Body of pancreas (tissue), 4 donors: ENCODE measurements at regions of chr4 and their contacts with region 1.

Region 1: DNA sequence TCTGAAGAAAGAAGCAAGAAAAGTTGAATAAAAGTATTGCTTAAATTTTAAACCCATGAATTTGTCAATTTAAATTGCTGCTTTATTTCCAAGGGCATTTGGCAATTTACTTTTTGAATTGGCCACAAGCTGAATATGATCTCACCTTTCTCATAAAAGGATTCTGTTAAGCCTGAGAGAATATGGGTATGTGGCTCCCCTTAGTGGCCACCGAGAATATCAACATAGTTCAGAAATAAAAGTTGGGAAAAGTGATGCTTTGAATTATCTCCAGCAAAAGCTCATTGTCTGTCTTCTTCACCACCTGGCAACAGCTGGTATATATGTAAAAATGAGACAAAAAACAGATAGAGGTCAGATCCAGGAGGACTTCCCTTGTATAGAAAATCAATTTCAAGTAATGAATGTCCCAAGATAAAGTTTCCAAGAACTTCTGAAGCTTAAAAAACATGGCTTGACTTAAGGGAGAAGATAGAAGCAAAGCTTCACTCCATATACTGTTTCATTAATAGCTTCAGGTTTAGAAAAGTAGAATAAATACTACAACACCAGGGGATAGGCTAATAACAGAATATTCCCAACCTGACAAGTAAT is 290.7 kb upstream of the FAM241A start:
- DNase-seq: peak; percentile 22 to 37 (median 30)
- ATAC-seq: peak; percentile 77
- H3K4me3 ChIP-seq: no peak overlapping the region
- H3K27ac ChIP-seq: no peak overlapping the region
- H3K4me1 ChIP-seq: no peaks in the 10 kb centered on the region
- H3K27me3 ChIP-seq: no peaks in the 10 kb centered on the region
- CTCF ChIP-seq: peak; percentile 37 to 76 (median 66)
- POLR2A ChIP-seq: no peak

Region 2: GRCh38 chr4:111639876-111640275 is 214.7 kb before region 1 on chr4:
- intact Hi-C with region 1: loop called (anchors 5 kb)
- DNase-seq: no peak
- ATAC-seq: no peak
- H3K4me3 ChIP-seq: no peak overlapping the region
- H3K27ac ChIP-seq: no peak overlapping the region
- H3K4me1 ChIP-seq: no peaks in the 10 kb centered on the region
- H3K27me3 ChIP-seq: no peaks in the 10 kb centered on the region
- CTCF ChIP-seq: no peak
- POLR2A ChIP-seq: no peak